ENCODE measurements at regions of chr18 and their contacts with region 1.

Region 1: DNA sequence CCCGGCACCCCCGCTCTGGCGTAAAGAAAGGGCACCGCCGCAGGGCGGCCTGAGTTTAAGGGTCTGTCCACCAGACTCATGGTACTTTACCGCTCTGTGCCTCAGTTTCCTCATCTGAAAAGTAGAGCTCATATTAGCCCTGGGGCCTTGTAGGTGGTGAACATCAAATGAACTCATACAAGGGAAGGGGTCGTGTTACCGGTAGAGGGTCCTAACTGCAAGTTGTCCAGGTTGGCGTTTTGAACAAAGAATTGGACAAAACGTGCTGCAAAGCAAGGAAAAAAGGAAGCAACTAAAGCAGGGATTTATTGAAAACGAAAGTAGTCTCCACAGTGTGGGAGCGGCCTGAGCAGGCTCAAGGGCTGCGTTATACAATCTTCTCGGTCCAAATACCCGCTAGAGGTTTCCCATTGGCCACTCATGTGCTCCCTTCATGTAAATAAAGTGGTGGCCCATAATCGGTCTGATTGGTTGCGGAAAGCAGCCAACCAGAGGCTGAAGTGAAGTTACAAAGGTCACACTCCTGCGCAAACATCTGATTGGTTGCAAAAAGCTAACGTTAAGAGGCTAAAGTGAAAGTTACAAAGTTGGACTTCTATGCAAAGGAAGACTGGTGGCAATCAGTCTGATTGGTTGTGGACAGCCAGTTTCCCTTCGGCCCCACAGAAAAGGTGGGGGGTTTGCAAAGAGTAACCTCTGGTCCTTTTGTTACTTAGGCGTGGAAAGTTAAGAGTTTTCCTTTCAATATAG is 80.7 kb upstream of the LDLRAD4 start:
- DNase-seq: no peak
- ATAC-seq: peak; percentile 82
- H3K4me3 ChIP-seq: peak overlapping the region; percentile 34 to 47
- H3K27ac ChIP-seq: peak overlapping the region; percentile 69
- H3K4me1 ChIP-seq: no peaks in the 10 kb centered on the region
- H3K27me3 ChIP-seq: no peaks in the 10 kb centered on the region
- CTCF ChIP-seq: no peak

Region 2: DNA sequence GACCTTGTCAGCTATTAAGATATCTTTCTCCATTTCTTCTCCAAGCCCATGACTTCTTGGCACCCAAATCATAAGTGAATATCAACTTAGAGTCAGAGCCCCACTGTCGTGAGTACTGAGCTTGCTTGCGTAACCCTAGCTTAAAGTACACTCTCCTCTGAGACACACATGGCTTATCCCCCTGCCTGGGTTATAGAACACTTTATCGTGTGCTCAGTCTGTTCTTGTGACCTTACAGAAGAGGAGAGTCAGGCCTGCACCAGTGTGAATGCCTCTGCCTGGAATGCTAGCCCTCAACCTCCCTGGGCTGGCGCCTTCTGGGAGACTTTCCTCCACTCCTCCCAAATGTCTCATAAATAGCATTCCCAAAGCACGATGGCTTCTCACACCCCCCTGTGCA is 67.4 kb before region 1 on chr18:
- CTCF ChIA-PET with region 1: no interaction called
- POLR2A ChIA-PET with region 1: no interaction called
- in situ Hi-C with region 1: no loop called
- intact Hi-C with region 1: loop called (anchors 10 kb)
- DNase-seq: no peak
- ATAC-seq: no peak
- H3K4me3 ChIP-seq: no peak overlapping the region
- H3K27ac ChIP-seq: no peak overlapping the region
- H3K4me1 ChIP-seq: no peaks in the 10 kb centered on the region
- H3K27me3 ChIP-seq: no peaks in the 10 kb centered on the region
- CTCF ChIP-seq: no peak

Region 3: GRCh38 chr18:13302040-13302439 is 164.2 kb after region 1 on chr18:
- CTCF ChIA-PET with region 1: no interaction called
- POLR2A ChIA-PET with region 1: interaction called, 14 read pairs
- in situ Hi-C with region 1: no loop called
- intact Hi-C with region 1: no loop called
- DNase-seq: no peak
- ATAC-seq: no peak
- H3K4me3 ChIP-seq: no peak overlapping the region
- H3K27ac ChIP-seq: no peak overlapping the region
- H3K4me1 ChIP-seq: no peaks in the 10 kb centered on the region
- H3K27me3 ChIP-seq: peaks cover 5% of the 10 kb centered on the region
- CTCF ChIP-seq: no peak

Measured in Panc1 (cell line).